ENCODE measurements at regions of chr9 and their contacts with region 1.

Region 1: DNA sequence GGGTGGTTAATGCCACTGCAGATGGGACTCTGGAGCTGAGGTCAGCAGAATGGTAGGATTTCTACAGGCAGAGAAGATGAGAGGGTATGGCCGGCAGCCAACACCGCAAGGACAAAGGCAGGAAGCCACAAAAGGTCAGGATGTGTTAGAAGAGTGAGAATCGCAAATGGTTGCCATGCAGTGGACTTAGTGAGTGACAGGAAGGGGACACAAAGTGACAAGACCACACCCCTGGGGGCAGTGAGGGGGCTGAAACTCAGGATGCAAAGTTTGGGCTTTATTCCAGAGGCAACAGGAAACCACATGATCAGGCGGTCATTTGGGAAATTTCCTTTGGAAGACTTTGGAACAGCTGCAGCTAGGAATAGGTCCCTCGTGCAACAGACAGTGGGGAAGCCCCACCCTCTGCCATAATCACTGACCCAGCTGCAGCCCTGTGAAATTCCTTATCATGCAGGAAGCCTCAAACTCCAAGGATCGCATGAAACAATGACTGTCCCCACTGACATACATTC is 14.2 kb upstream of the CCDC180 start:
- DNase-seq: no peak
- H3K4me3 ChIP-seq: no peak overlapping the region
- H3K27ac ChIP-seq: no peak overlapping the region
- H3K4me1 ChIP-seq: no peaks in the 10 kb centered on the region
- H3K27me3 ChIP-seq: no peaks in the 10 kb centered on the region
- CTCF ChIP-seq: no peak

Region 2: GRCh38 chr9:97324954-97325353 is 31.7 kb after region 1 on chr9:
- CTCF ChIA-PET with region 1: no interaction called
- dilution Hi-C with region 1: loop called (anchors 5 kb)
- in situ Hi-C with region 1: no loop called
- intact Hi-C with region 1: no loop called
- DNase-seq: no peak
- H3K4me3 ChIP-seq: no peak overlapping the region
- H3K27ac ChIP-seq: no peak overlapping the region
- H3K4me1 ChIP-seq: no peaks in the 10 kb centered on the region
- H3K27me3 ChIP-seq: no peaks in the 10 kb centered on the region
- CTCF ChIP-seq: no peak

Measured in mammary epithelial cell (primary cell).